ENCODE measurements at regions of chr19 and their contacts with region 1.

Region 1: DNA sequence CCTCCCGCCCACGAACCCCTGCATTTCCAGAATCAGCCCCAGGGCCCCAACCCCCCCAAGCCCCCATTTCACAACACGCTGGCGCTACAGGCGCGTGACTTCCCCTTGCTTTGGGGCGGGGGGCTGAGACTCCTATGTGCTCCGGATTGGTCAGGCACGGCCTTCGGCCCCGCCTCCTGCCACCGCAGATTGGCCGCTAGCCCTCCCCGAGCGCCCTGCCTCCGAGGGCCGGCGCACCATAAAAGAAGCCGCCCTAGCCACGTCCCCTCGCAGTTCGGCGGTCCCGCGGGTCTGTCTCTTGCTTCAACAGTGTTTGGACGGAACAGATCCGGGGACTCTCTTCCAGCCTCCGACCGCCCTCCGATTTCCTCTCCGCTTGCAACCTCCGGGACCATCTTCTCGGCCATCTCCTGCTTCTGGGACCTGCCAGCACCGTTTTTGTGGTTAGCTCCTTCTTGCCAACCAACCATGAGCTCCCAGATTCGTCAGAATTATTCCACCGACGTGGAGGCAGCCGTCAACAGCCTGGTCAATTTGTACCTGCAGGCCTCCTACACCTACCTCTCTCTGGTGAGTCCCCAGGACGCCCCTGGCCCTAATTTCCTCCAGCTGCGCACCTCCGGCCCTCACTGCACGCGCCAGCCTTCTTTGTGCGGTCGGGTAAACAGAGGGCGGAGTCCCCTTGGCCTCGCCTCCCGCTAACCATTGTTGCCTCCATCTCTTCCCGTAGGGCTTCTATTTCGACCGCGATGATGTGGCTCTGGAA is at the start of gene FTL:
- DNase-seq: peak; percentile 99
- ATAC-seq: peak; percentile 59 to 81 (median 69)
- H3K4me3 ChIP-seq: peak within 1 kb of the TSS; percentile 84 to 97 (median 87)
- H3K27ac ChIP-seq: peak within 1 kb of the TSS; percentile 97 to 99 (median 98)
- H3K4me1 ChIP-seq: peaks cover 0 to 27% (median 0%) of the 10 kb centered on the region in 4 donors
- H3K27me3 ChIP-seq: no peaks in the 10 kb centered on the region
- CTCF ChIP-seq: no peak
- POLR2A ChIP-seq: peak; percentile 100
- total RNA-seq, gene FTL: 5,005 to 19,229 (median 10,447) TPM

Region 2: DNA sequence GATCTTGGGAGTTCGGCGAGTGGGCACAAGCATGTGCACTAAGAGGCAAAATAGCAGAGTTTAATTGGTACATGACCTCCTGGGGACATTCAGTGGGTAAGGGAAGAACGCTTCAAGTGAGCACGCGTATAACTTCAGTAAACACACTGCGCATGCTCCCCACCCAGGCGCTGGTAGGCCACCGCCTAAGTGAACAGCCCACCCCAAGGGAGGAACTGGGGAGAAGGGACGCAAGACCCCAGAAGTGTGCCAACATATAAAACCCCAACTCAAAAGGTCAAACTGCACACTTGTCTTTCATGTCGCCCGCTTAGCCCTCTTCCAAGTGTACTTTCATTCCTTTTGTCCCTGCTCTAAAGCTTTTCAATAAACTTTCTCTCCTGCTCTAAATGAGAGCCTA is 281.9 kb before region 1 on chr19:
- intact Hi-C with region 1: no loop called
- DNase-seq: no peak
- ATAC-seq: peak in 3 of 4 donors; percentile 39 to 56 (median 54)
- H3K4me3 ChIP-seq: no peak overlapping the region
- H3K27ac ChIP-seq: no peak overlapping the region
- H3K4me1 ChIP-seq: peaks cover 0 to 6% (median 3%) of the 10 kb centered on the region in 4 donors
- H3K27me3 ChIP-seq: no peaks in the 10 kb centered on the region
- CTCF ChIP-seq: no peak
- POLR2A ChIP-seq: no peak

Region 3: DNA sequence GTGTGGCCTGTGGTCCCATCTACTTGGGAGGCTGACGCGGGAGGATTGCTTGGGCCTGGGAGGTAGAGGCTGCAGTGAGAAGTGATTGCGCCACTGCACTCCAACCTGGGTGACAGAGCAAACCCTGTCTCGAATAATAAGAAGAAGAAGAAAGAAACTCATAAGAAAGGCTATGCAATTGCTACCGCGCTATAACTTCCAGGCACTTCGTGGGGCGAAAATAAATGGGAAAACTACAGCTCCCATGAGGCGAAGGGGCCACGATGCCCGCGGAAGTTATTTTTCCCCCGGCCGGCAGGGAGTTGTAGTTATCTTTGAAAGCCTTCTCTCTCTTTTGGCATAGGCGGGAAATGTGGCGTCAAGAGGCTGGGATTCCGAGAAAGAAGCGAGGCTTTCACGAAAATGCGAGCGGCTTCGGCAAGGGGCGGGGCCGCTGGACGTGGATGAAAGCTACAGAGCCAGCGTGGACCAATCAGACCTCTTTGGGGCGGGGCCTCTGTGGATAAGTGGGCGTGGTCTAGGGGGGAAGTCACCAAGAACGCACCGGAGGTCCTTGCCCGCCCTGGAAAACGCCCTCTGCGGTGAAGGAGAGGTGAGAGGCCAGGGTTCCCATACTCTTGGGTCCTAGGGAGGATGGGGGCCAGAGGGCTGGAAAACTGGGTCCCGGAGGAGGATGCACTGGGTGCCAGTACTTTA is 65.3 kb before region 1 on chr19 and contains the start of gene NUCB1:
- intact Hi-C with region 1: loop called in 1 of 2 experiments (anchors 10 kb)
- DNase-seq: peak; percentile 99
- ATAC-seq: peak; percentile 96 to 99 (median 98)
- H3K4me3 ChIP-seq: peak within 1 kb of the TSS; percentile 69 to 98 (median 76)
- H3K27ac ChIP-seq: peak within 1 kb of the TSS; percentile 95 to 97 (median 96)
- H3K4me1 ChIP-seq: peaks cover 0 to 20% (median 11%) of the 10 kb centered on the region in 4 donors
- H3K27me3 ChIP-seq: no peaks in the 10 kb centered on the region
- CTCF ChIP-seq: peak; percentile 18 to 38 (median 31)
- POLR2A ChIP-seq: peak; percentile 77
- total RNA-seq, gene NUCB1: 306 to 376 (median 349) TPM

Region 4: GRCh38 chr19:48993175-48994034 is 28.2 kb after region 1 on chr19 and contains the starts of genes GYS1 and RUVBL2:
- intact Hi-C with region 1: no loop called
- DNase-seq: peak; percentile 100
- ATAC-seq: peak; percentile 87 to 95 (median 92)
- H3K4me3 ChIP-seq: peak within 1 kb of the TSS; percentile 85 to 89 (median 87)
- H3K27ac ChIP-seq: peak within 1 kb of the TSS; percentile 94 to 99 (median 97)
- H3K4me1 ChIP-seq: peaks cover 0 to 18% (median 11%) of the 10 kb centered on the region in 4 donors
- H3K27me3 ChIP-seq: no peaks in the 10 kb centered on the region
- CTCF ChIP-seq: peak; percentile 96 to 99 (median 98)
- POLR2A ChIP-seq: peak; percentile 92
- total RNA-seq, gene GYS1: 4.7 to 12.5 (median 8.9) TPM
- total RNA-seq, gene RUVBL2: 22.8 to 66.7 (median 32.3) TPM

Region 5: DNA sequence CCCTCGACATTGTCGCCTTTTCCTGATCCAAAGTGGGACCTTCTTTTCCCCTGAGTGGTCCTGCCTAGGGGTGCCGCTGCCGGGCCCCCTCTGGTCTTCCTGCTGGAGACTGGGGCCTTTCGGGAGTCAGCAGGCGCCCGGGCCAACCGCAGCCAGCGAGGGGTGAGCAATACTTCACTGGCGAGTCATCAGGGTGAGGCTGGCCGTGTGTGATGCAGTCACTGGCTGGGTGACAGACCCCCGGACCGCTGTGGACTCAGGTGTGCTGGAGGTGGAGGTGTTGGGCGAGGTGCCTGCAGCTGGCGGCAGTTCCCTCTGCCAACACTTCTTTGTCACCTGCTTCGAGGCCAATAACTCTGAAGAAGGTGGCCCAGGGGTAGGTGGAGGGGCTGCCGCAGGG is 77.0 kb after region 1 on chr19:
- intact Hi-C with region 1: no loop called
- DNase-seq: no peak
- ATAC-seq: no peak
- H3K4me3 ChIP-seq: no peak overlapping the region
- H3K27ac ChIP-seq: no peak overlapping the region
- H3K4me1 ChIP-seq: no peaks in the 10 kb centered on the region
- H3K27me3 ChIP-seq: no peaks in the 10 kb centered on the region
- CTCF ChIP-seq: no peak
- POLR2A ChIP-seq: no peak